Motor neuron (in vitro differentiated cells): ENCODE measurements at regions of chr16 and their contacts with region 1.

Region 1: GRCh38 chr16:87278191-87279095 is 38.7 kb downstream of the C16orf95 start:
- ATAC-seq: peak; percentile 92 to 99 (median 97)
- H3K4me3 ChIP-seq: no peak overlapping the region
- H3K27ac ChIP-seq: no peak overlapping the region
- H3K4me1 ChIP-seq: peaks cover 10 to 11% of the 10 kb centered on the region in 2 donors

Region 2: DNA sequence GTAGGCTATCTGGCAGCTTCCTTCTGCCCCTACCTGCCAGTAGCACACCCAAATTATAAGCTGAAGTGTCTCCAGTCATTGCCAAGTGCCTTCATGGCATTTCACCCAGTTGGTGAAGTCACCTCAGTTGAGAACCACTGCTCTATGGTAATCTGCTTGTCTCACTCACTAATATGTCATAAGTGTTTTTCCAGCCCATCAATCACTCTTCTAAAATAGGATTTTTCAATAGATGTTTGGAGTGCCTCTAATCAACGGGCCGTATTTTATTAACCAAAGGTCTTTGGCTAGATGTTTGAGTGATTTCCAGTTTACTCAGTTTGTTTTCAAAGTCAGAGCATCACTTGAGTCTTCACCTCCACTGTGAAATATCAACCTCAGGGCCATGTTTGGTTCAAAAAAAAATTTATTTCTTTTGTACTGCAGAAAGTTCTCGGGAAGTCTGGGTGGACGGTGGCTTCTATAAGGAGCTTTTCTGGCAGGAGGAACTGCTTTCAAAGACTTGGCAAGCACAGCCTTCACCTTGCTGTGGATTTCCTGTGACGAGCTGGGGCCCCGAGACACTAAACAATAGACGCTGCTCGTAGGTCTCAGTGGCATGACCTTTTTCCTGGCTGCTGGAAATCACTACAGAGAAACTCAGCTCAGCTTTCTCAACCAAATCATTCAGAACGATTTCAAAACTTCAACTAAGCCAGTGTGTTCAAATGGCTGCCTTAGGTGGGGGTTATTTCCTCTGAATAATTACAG is 863.3 kb before region 1 on chr16:
- in situ Hi-C with region 1: no loop called
- ATAC-seq: no peak
- H3K4me3 ChIP-seq: no peak overlapping the region
- H3K27ac ChIP-seq: no peak overlapping the region
- H3K4me1 ChIP-seq: peaks cover 0 to 3% of the 10 kb centered on the region in 2 donors

Region 3: DNA sequence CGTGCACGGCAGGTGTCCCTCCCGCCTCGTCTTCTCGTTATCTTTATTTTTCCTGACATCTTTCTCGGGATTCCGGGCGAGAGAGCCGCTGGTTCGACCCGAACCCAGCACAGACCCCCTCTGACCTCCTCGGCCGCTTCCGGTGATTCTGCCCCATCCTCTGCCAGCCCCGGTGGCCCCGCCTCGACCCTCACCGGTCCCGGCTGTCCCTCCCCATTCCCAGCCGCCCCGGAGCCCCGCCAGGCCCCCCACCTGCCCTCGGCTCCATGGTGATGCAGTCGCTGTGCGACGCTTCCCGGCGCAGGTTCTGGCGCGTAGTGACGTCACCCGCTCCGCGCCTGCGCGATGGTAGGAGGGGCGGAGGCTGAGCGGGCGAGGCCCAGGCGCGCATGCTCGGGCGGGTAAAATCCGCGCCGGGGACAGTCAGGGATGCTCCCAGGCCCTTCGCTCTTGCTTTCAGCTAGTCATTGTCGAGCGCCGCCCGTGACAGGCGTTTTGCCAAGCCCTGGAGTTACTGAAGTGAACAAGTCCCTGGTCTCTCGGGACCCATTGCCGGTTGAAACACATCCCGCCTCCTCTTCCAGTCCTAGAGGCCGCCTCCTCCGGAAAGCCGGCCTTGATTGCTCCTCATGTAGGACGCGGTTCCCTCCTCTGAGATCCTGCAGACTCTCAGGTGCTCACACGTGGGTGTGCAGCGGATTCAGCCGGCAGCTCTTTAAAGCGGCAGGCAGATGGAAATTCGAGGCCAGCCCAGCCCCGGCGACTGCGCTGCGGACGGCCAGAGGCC is 723.3 kb before region 1 on chr16 and contains the start of gene MTHFSD:
- in situ Hi-C with region 1: loop called in 7 of 9 experiments (anchors 10 to 25 kb)
- ATAC-seq: peak; percentile 85 to 94 (median 90)
- H3K4me3 ChIP-seq: peak within 1 kb of the TSS; percentile 65 to 95 (median 73)
- H3K27ac ChIP-seq: peak within 1 kb of the TSS; percentile 66 to 84
- H3K4me1 ChIP-seq: peaks cover 13 to 16% of the 10 kb centered on the region in 2 donors
- total RNA-seq, gene MTHFSD: 10.4 to 36.4 (median 19.4) TPM

Region 4: DNA sequence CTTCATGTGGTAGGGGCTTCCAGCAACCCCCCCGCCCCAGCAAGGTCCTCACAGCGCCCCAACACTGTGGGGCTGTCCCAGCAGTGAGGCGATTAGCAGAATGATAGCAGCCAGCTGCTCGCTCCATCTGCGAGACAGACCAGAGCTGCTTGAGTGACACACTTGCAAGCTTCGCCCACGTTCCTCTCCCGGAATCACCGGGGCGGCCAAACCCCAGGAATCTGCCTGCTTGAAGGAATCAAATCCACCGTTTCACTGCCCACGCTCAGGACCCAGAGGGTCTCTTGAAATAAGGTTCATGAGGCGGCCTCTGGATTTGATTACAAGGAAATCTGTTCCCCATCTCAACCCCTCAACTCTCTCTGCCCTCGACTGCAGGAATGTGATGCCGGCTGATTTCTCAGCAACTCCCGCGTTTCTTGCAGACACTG is 317.3 kb before region 1 on chr16:
- in situ Hi-C with region 1: no loop called
- ATAC-seq: peak in 2 of 8 experiments; percentile 36 to 46
- H3K4me3 ChIP-seq: no peak overlapping the region
- H3K27ac ChIP-seq: no peak overlapping the region
- H3K4me1 ChIP-seq: peaks cover 34 to 35% of the 10 kb centered on the region in 2 donors

Region 5: GRCh38 chr16:87531418-87531817 is 253.0 kb after region 1 on chr16:
- in situ Hi-C with region 1: no loop called
- ATAC-seq: no peak
- H3K4me3 ChIP-seq: no peak overlapping the region
- H3K27ac ChIP-seq: no peak overlapping the region
- H3K4me1 ChIP-seq: no peaks in the 10 kb centered on the region